Psoas muscle (tissue), 8 donors: ENCODE measurements at regions of chr15 and their contacts with region 1.

Region 1: DNA sequence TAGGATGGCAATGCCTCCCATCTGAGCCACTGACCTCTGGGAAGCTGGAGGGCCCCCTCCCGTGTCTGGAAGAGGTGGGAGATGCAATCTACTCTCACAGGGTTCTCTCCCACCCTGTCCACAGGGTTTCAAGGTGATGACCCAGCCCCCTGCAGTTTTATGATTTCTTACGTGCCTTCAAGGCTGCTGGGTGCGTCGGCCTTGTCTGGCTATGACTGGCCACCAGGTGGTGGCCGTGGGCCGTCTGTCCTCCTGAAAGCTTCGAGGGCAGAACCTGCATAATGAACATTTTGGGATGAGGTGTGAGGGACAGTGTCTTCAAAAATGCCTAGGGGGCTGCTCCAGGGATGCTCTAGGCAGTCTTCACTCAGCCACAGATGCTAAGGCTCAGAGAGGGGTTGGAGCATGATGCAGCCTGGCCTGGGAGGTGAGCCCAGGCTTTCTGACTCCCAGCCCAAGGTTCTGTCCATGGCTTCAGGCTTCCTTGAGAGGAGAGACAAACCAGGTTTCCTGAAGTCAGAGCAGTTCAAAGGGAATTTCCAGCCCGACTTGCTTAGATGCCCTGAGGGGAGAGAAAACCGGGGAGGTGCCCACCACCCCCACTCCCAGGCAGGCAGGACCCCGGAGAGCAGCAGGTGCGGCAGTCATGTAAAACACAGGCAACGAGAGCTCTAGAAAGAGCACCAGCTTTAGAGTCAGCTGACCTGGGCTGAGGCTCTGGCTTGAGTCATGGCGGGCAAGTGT is 18.7 kb downstream of the ISG20 start:
- DNase-seq: no peak
- ATAC-seq: peak; percentile 44 to 75 (median 54)
- H3K4me3 ChIP-seq: no peak overlapping the region
- H3K27ac ChIP-seq: no peak overlapping the region
- H3K4me1 ChIP-seq: no peaks in the 10 kb centered on the region
- H3K27me3 ChIP-seq: no peaks in the 10 kb centered on the region
- CTCF ChIP-seq: peak; percentile 58

Region 2: DNA sequence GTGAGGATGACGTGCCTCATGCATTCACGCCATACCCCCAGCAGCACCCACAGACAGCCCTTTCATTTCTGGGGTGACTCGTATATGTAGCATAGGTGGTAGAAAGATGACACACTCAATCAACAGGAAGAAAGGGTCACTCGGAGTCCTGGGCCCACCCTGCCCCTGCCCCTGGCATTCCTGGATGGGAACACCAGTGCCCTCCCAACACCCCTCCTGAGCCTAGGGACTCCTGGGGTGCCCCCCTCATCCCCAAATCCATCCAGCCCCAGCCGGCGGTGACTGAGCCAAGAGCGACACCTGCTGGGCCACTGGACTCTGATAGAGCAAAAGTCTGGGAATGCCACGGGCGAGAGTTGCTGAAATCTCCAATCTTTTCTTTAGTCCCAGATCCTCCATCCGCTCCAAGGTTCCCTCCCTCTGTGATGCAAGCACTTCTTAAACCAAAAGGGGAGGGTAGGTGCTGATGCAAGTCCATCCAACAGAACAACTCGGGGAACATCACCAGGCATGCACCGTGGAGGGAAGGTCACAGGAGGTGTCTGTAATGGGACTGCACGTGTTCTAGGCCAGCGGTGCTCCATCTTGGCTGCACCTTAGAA is 176.8 kb after region 1 on chr15:
- intact Hi-C with region 1: loop called (anchors 5 kb)
- DNase-seq: peak; percentile 29 to 58
- ATAC-seq: peak in 2 of 4 donors; percentile 50 to 54
- H3K4me3 ChIP-seq: no peak overlapping the region
- H3K27ac ChIP-seq: no peak overlapping the region
- H3K4me1 ChIP-seq: no peaks in the 10 kb centered on the region
- H3K27me3 ChIP-seq: peaks cover 0 to 2% (median 0%) of the 10 kb centered on the region in 3 donors
- CTCF ChIP-seq: peak; percentile 46